ENCODE measurements at regions of chr22 and their contacts with region 1.

Region 1: GRCh38 chr22:30444632-30445437 is 19.3 kb downstream of the MTFP1 start:
- DNase-seq: peak in 4 of 6 donors; percentile 30 to 72 (median 52)
- ATAC-seq: peak; percentile 86 to 96 (median 92)
- H3K4me3 ChIP-seq: no peak overlapping the region
- H3K27ac ChIP-seq: no peak overlapping the region
- H3K4me1 ChIP-seq: peaks cover 0 to 6% (median 5%) of the 10 kb centered on the region in 3 donors
- H3K27me3 ChIP-seq: no peaks in the 10 kb centered on the region
- CTCF ChIP-seq: peak; percentile 71 to 81 (median 74)

Region 2: GRCh38 chr22:30596886-30597285 is 152.1 kb after region 1 on chr22:
- intact Hi-C with region 1: loop called in 2 of 3 experiments (anchors 5 to 10 kb)
- DNase-seq: peak in 2 of 6 donors; percentile 33 to 69
- ATAC-seq: peak in 3 of 4 donors; percentile 34 to 46 (median 42)
- H3K4me3 ChIP-seq: peak overlapping the region in 1 of 4 donors; percentile 27
- H3K27ac ChIP-seq: peak overlapping the region in 2 of 4 donors; percentile 36 to 47
- H3K4me1 ChIP-seq: peaks cover 0 to 5% (median 0%) of the 10 kb centered on the region in 3 donors
- H3K27me3 ChIP-seq: no peaks in the 10 kb centered on the region
- CTCF ChIP-seq: no peak

Region 3: GRCh38 chr22:30606455-30607299 is 161.8 kb after region 1 on chr22 and contains the start of gene TCN2:
- intact Hi-C with region 1: loop called in 1 of 3 experiments (anchors 10 kb)
- DNase-seq: peak; percentile 63 to 84 (median 72)
- ATAC-seq: peak; percentile 82 to 87 (median 86)
- H3K4me3 ChIP-seq: peak within 1 kb of the TSS; percentile 19 to 63 (median 42)
- H3K27ac ChIP-seq: peak within 1 kb of the TSS; percentile 35 to 78 (median 54)
- H3K4me1 ChIP-seq: peaks cover 0 to 17% (median 10%) of the 10 kb centered on the region in 3 donors
- H3K27me3 ChIP-seq: no peaks in the 10 kb centered on the region
- CTCF ChIP-seq: no peak
- total RNA-seq, gene TCN2: 3.6 to 10.0 (median 5.9) TPM

Measured in pancreas (tissue), 10 donors.